ENCODE measurements at regions of chr9 and their contacts with region 1.

Region 1: GRCh38 chr9:128863647-128864046 is 18.1 kb downstream of the KYAT1 start:
- DNase-seq: peak; percentile 69
- H3K4me3 ChIP-seq: no peak overlapping the region
- H3K27ac ChIP-seq: no peak overlapping the region
- H3K4me1 ChIP-seq: peaks cover 7% of the 10 kb centered on the region
- H3K27me3 ChIP-seq: no peaks in the 10 kb centered on the region
- CTCF ChIP-seq: peak; percentile 95

Region 2: GRCh38 chr9:128528445-128529160 is 335.0 kb before region 1 on chr9:
- CTCF ChIA-PET with region 1: interaction called, 11 read pairs
- POLR2A ChIA-PET with region 1: no interaction called
- intact Hi-C with region 1: no loop called
- DNase-seq: no peak
- H3K4me3 ChIP-seq: no peak overlapping the region
- H3K27ac ChIP-seq: no peak overlapping the region
- H3K4me1 ChIP-seq: peaks cover 1% of the 10 kb centered on the region
- H3K27me3 ChIP-seq: no peaks in the 10 kb centered on the region
- CTCF ChIP-seq: no peak

Region 3: DNA sequence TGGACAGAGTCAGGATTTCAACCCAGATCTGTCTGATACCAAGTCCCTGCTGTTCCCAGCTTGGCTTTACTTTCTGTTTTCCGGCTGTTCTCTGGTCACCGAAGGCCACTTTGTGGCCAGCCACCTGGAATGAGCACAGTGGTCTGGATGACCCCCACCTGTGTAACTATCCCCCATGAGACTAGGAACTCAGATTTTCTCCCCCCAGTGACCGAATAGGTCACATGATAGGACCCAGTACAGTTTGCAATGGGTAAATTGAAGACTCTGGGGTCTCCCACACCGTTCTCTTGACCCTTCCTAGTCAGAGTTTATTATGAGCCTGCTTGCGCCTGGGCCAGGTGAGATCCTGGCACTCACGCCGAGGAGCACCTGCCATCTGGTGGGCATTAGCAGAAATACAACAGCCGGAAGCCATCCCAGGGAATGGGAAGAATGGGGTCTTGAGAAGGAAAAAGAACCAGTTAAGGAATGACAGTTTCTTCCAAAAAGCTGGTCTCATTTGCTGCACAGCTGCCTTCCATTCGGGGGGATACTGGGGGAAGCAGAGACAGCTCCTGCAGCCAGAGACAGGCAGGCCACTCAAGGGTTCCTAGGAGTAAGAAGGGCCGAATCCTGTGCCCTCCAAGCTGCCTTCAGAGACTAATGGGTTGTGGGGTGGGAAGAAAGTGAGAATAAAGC is 64.2 kb after region 1 on chr9:
- CTCF ChIA-PET with region 1: interaction called, 8 read pairs
- POLR2A ChIA-PET with region 1: no interaction called
- intact Hi-C with region 1: loop called (anchors 1 kb)
- DNase-seq: peak; percentile 66
- H3K4me3 ChIP-seq: no peak overlapping the region
- H3K27ac ChIP-seq: no peak overlapping the region
- H3K4me1 ChIP-seq: peaks cover 2% of the 10 kb centered on the region
- H3K27me3 ChIP-seq: no peaks in the 10 kb centered on the region
- CTCF ChIP-seq: peak; percentile 92

Region 4: GRCh38 chr9:128947422-128948301 is 84.0 kb after region 1 on chr9 and contains the starts of genes DOLK and NUP188:
- CTCF ChIA-PET with region 1: no interaction called
- POLR2A ChIA-PET with region 1: no interaction called
- intact Hi-C with region 1: loop called (anchors 5 kb)
- DNase-seq: peak; percentile 96
- H3K4me3 ChIP-seq: peak within 1 kb of the TSS; percentile 93
- H3K27ac ChIP-seq: peak within 1 kb of the TSS; percentile 93
- H3K4me1 ChIP-seq: peaks cover 5% of the 10 kb centered on the region
- H3K27me3 ChIP-seq: no peaks in the 10 kb centered on the region
- CTCF ChIP-seq: no peak
- total RNA-seq, gene DOLK: 20.6 and 23.2 TPM in 2 replicates
- total RNA-seq, gene NUP188: 147 and 170 TPM in 2 replicates

Region 5: DNA sequence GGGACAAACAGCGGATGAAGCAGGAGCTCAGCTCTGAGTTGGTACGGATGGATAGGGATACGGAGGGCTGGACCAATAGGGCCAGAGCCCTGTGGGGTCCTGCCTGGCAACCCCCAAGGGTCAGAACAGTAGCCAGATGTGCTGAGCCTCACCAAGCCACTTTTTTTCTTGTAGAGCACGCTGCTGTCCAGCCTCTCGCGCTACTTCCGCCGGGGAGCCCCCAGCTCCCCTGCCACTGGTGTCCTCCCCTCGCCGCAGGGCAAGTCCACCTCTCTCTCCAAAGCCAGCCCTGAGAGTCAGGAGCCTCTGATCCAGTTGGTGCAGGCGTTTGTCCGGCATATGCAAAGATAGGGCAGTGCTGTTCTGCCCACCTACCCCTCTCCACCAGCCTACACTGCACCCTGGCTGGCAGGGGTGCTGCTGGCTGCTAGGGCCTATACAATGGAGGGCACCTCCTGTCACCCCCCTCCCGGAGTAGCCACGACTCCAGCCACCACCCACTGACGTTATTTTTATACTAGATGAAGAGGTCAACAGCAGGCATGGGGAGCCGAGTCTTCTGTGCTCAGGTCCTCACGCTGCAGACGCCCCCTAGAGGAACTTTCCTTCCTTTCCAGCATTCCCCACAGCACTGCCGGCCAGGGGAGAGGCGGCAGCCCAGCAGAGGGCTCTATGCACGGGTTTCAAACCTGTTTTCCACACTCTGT is 142.8 kb after region 1 on chr9:
- CTCF ChIA-PET with region 1: no interaction called
- POLR2A ChIA-PET with region 1: no interaction called
- intact Hi-C with region 1: no loop called
- DNase-seq: peak; percentile 87
- H3K4me3 ChIP-seq: no peak overlapping the region
- H3K27ac ChIP-seq: peak overlapping the region; percentile 18
- H3K4me1 ChIP-seq: no peaks in the 10 kb centered on the region
- H3K27me3 ChIP-seq: no peaks in the 10 kb centered on the region
- CTCF ChIP-seq: peak; percentile 96

Region 6: DNA sequence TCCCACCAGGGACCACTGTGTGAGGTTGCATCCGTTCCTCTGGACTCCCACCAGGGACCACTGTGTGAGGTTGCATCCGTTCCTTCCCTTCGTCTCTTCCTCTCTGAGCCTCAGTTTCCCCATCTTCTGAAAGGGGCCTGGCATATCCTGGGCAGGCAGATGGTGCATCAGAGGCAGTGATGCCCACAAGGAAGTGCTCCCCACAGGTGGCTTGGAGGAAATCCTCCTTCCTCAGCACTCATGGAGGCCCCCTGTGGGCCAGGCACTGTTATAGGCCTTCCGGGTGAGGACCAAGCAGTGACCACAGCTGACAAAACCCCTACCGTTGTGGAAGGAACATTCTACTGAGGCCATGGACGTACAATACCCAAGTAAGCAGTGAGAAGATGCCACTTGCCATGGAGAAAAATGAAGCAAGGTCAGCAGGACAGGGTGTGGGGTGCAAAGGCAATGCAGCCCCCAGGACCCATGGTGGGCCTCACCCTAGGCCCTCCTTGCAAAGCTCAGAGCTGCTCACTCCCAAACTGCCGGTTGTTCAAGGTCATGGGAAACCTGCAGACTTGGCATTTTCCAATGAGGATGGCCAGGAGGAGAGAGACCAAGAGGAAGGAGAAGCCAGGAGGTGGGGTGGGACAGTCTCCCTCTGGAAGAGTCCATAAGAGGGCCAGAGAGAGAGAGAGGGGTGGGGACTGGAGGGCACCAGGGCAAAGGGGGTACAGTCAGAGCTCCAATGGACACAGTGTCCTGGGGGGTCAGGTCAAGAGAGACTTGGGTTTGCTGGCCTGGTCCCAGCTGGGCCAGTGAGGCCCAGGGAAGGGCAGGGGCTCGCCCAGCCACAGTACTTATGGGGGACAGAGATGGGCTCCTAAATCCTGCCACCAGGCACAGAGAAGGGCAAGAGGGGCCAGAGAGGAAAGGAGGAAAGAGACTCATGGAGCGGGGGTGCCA is 706.1 kb after region 1 on chr9:
- CTCF ChIA-PET with region 1: no interaction called
- POLR2A ChIA-PET with region 1: no interaction called
- intact Hi-C with region 1: no loop called
- DNase-seq: peak; percentile 38
- H3K4me3 ChIP-seq: peak overlapping the region; percentile 57
- H3K27ac ChIP-seq: peak overlapping the region; percentile 79
- H3K4me1 ChIP-seq: peaks cover 35% of the 10 kb centered on the region
- H3K27me3 ChIP-seq: no peaks in the 10 kb centered on the region
- CTCF ChIP-seq: peak; percentile 44; the same call in 1 of the 2 replicates